ENCODE measurements at regions of chr18 and their contacts with region 1.

Region 1: GRCh38 chr18:8704361-8705279 is 736 bp upstream of the MTCL1 start:
- DNase-seq: peak; percentile 94
- ATAC-seq: peak; percentile 97

Region 2: DNA sequence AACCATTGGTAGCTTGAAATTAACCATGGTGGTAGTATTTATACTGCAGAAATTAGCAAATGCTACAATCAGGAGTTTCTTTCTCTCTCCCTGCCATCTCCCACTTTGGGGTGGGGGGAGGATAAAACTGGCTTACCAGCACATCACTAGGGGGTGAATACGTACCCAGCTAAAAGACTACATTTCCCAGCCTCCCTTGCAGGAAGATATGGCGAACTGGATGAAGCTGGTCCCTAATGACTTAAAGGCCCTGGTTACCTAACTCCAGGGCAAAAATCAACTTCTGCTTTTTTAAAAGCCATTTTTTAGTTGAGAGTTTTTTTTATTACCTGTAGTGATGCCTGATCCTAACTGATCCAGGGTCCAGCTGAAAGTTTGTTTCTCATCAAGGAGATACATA is 165.7 kb before region 1 on chr18:
- intact Hi-C with region 1: no loop called
- DNase-seq: no peak
- ATAC-seq: no peak

Region 3: GRCh38 chr18:8623549-8624106 is 81.0 kb before region 1 on chr18:
- intact Hi-C with region 1: loop called (anchors 10 kb)
- DNase-seq: peak; percentile 65
- ATAC-seq: peak; percentile 93

Region 4: DNA sequence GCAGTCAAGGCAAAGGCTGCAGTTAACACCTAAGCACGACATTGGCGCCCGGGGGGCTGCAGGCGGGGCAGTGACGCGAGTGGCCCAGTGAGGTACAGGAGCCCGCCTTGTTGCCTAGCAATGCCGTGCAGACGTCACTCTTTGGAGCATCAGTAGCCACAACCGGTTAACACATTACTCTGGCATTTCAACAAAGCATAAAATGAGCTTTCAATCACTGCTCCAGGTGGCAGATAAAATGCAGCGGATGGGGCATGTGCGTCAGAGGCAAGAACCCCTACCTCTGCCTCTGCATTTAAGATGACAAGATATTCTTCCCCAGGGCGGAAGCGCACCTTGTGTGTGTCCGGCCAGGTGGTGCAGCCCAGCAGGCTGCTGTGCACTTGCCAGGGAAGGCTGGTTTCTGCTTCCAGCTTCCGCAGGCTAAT is 140.1 kb after region 1 on chr18:
- intact Hi-C with region 1: loop called (anchors 10 kb)
- DNase-seq: no peak
- ATAC-seq: no peak

Region 5: GRCh38 chr18:9055185-9055584 is 350.6 kb after region 1 on chr18:
- intact Hi-C with region 1: loop called (anchors 10 kb)
- DNase-seq: no peak
- ATAC-seq: no peak

Region 6: GRCh38 chr18:9147440-9148202 is 443.0 kb after region 1 on chr18:
- intact Hi-C with region 1: loop called (anchors 10 kb)
- DNase-seq: no peak
- ATAC-seq: peak; percentile 76

Measured in Right ventricle myocardium inferior (tissue), 1 donor.